Activated T-helper 2 cell treated with anti-CD3 and anti-CD28 coated beads, Interferon-gamma antibody, Interleukin-2, Interleukin-4, amounts not matched to agents 10 μg/mL and 5 μg/mL and 100 μg/mL, durations not matched to agents 14 hours and 24 hours and 36 hours (primary cell): ENCODE measurements at regions of chr1 and their contacts with region 1.

Region 1: GRCh38 chr1:208025031-208025430 is 114.1 kb upstream of the CD34 start:
- DNase-seq: no peak
- H3K4me3 Mint-ChIP-seq: no peak overlapping the region
- H3K27ac Mint-ChIP-seq: no peak overlapping the region
- H3K4me1 Mint-ChIP-seq: no peaks in the 10 kb centered on the region
- H3K27me3 Mint-ChIP-seq: peaks cover 3% of the 10 kb centered on the region

Region 2: DNA sequence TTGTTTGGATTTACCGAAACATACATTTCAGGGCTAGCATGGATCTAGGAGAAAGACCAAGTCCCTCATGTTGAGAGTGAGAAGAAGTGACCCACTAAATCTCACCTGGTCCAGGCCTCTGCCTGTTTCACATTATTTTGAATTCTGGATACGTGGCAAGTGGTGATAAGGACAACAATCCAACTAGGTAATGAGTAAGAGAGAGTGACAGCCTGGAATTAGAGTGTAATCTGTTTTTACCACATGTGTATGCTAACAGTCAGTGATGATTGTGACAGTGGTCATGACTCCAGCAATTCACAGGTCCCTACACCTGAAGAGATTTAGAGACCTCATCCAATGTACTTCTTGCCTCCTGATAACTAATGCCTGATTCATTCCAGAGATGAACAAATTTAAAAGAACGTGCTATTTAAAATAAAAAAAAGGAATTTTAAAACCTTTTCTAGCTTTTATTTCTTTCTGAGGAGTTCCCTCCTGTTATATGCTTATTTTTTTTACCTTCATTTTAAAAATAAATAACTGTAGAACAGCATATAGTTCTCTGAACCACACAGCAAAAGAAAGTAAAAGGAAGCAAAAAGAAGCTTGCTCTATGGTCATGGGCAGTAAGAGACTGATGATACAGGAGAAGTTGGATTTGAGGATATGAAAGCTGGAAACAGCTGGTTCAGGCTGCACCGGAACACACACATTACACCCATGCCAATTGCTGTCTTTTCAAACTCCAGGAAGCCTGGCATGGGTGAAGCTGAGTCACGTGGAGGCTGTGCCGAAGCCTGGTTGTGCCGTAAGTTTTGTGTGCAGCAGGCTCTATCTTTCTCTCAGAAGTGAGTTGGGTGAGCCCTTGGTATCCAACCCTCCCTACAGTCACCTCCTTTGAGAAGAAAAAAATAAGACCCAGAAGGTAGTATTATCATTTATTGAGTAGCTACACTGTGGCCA is 1007.1 kb before region 1 on chr1:
- intact Hi-C with region 1: no loop called
- DNase-seq: no peak
- H3K4me3 Mint-ChIP-seq: no peak overlapping the region
- H3K27ac Mint-ChIP-seq: no peak overlapping the region
- H3K4me1 Mint-ChIP-seq: peaks cover 6% of the 10 kb centered on the region
- H3K27me3 Mint-ChIP-seq: peaks cover 19% of the 10 kb centered on the region

Region 3: GRCh38 chr1:208093754-208094719 is 69.0 kb after region 1 on chr1:
- intact Hi-C with region 1: loop called (anchors 1 kb)
- DNase-seq: peak; percentile 41
- H3K4me3 Mint-ChIP-seq: no peak overlapping the region
- H3K27ac Mint-ChIP-seq: no peak overlapping the region
- H3K4me1 Mint-ChIP-seq: no peaks in the 10 kb centered on the region
- H3K27me3 Mint-ChIP-seq: no peaks in the 10 kb centered on the region